Common myeloid progenitor, CD34-positive (primary cell): ENCODE measurements at regions of chr7 and their contacts with region 1.

Region 1: GRCh38 chr7:130988443-130988842 is 254.4 kb upstream of the KLF14 start:
- DNase-seq: peak in 2 of 3 donors; percentile 75 to 76
- H3K4me3 ChIP-seq: no peak overlapping the region
- H3K27ac ChIP-seq: peak overlapping the region in 1 of 2 experiments; percentile 46
- H3K4me1 ChIP-seq: peaks cover 4 to 60% (median 23%) of the 10 kb centered on the region in 4 experiments
- H3K27me3 ChIP-seq: no peaks in the 10 kb centered on the region

Region 2: GRCh38 chr7:131007394-131008330 is 19.2 kb after region 1 on chr7:
- CTCF ChIA-PET with region 1: interaction called, 30 read pairs
- POLR2A ChIA-PET with region 1: no interaction called
- DNase-seq: peak; percentile 82 to 89 (median 85)
- H3K4me3 ChIP-seq: peak overlapping the region in 4 of 7 experiments; percentile 11 to 37 (median 24)
- H3K27ac ChIP-seq: peak overlapping the region; percentile 37 to 82
- H3K4me1 ChIP-seq: peaks cover 18 to 70% (median 57%) of the 10 kb centered on the region in 4 experiments
- H3K27me3 ChIP-seq: no peaks in the 10 kb centered on the region

Region 3: DNA sequence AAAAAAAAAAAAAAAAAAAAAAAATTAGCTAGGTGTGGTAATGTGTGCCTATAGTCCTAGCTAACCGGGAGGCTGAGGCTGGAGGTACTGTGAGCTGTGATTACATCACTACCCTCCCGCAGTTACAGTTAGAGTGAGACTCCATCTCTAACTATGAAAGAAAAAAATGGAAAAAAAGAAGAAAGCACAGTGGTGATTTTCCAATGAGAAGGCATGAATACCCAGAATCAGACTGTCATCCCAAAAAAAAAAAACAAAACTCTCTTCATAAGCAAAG is 69.3 kb after region 1 on chr7:
- CTCF ChIA-PET with region 1: no interaction called
- POLR2A ChIA-PET with region 1: no interaction called
- DNase-seq: peak in 2 of 3 donors; percentile 62 to 70
- H3K4me3 ChIP-seq: peak overlapping the region in 2 of 7 experiments; percentile 2 to 11
- H3K27ac ChIP-seq: peak overlapping the region; percentile 67 to 86
- H3K4me1 ChIP-seq: peaks cover 14 to 75% (median 56%) of the 10 kb centered on the region in 4 experiments
- H3K27me3 ChIP-seq: no peaks in the 10 kb centered on the region

Region 4: GRCh38 chr7:131164025-131164899 is 175.8 kb after region 1 on chr7:
- CTCF ChIA-PET with region 1: no interaction called
- POLR2A ChIA-PET with region 1: no interaction called
- DNase-seq: no peak
- H3K4me3 ChIP-seq: no peak overlapping the region
- H3K27ac ChIP-seq: no peak overlapping the region
- H3K4me1 ChIP-seq: no peaks in the 10 kb centered on the region
- H3K27me3 ChIP-seq: no peaks in the 10 kb centered on the region